ENCODE measurements at regions of chr2 and their contacts with region 1.

Region 1: GRCh38 chr2:70301344-70302194 is at the start of gene FAM136A:
- DNase-seq: peak; percentile 81 to 93 (median 88)
- ATAC-seq: peak; percentile 98
- H3K4me3 ChIP-seq: peak within 1 kb of the TSS; percentile 83
- H3K4me3 Mint-ChIP-seq: peak within 1 kb of the TSS; percentile 87 to 97 (median 92)
- H3K27ac ChIP-seq: peak within 1 kb of the TSS; percentile 81
- H3K27ac Mint-ChIP-seq: peak within 1 kb of the TSS; percentile 84 to 94 (median 90)
- H3K4me1 ChIP-seq: peaks cover 6 to 7% of the 10 kb centered on the region in 2 donors
- H3K4me1 Mint-ChIP-seq: peaks cover 10 to 40% (median 27%) of the 10 kb centered on the region in 7 donors
- H3K27me3 ChIP-seq: no peaks in the 10 kb centered on the region
- H3K27me3 Mint-ChIP-seq: no peaks in the 10 kb centered on the region
- total RNA-seq, gene FAM136A: 16.2 to 40.9 (median 28.2) TPM

Region 2: GRCh38 chr2:69914170-69914960 is 387.2 kb before region 1 on chr2:
- CTCF ChIA-PET with region 1: interaction called, 56 read pairs
- POLR2A ChIA-PET with region 1: interaction called, 20 read pairs
- intact Hi-C with region 1: loop called (anchors 1 kb)
- DNase-seq: peak in 7 of 9 donors; percentile 97 to 100 (median 100)
- ATAC-seq: peak; percentile 94
- H3K4me3 ChIP-seq: peak overlapping the region; percentile 98
- H3K4me3 Mint-ChIP-seq: peak overlapping the region; percentile 70 to 92 (median 82)
- H3K27ac ChIP-seq: peak overlapping the region; percentile 91
- H3K27ac Mint-ChIP-seq: peak overlapping the region; percentile 60 to 96 (median 89)
- H3K4me1 ChIP-seq: peaks cover 4 to 8% of the 10 kb centered on the region in 2 donors
- H3K4me1 Mint-ChIP-seq: peaks cover 8 to 39% (median 34%) of the 10 kb centered on the region in 7 donors
- H3K27me3 ChIP-seq: no peaks in the 10 kb centered on the region
- H3K27me3 Mint-ChIP-seq: no peaks in the 10 kb centered on the region

Region 3: DNA sequence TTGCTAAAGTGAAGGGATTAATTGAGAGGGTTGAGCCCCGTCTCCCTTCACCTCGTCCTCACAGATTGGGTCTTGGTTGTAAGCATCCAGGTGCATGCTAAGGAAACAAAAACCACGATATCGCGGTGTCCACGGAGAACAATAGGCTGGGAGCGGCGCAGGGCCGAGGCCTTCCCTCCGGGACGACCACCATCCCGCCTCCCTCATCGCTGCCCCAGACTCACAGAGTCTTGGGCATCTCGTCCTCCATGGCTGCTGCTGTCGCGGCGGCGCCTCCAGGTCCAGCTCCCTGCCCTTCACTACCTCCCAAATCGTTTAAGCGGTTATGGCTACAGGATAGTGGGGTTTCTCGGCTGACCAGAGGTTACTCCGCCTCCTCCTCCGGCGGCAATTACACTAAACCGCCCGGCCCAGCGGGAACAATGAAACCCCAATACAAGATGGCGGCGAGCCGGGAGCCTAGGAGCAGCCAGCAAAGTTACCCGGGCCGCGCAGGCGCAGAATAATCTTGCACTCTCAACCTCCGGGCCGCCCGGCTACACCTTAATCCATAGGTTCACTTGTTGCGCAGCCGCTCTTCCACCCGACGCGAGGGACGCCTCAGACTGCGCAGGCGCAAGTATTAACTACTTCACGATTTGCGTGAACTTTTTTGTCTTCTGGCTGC is 53.3 kb before region 1 on chr2 and contains the start of gene TIA1:
- CTCF ChIA-PET with region 1: no interaction called
- POLR2A ChIA-PET with region 1: no interaction called
- intact Hi-C with region 1: loop called (anchors 1 kb)
- DNase-seq: peak; percentile 94 to 99 (median 98)
- ATAC-seq: peak; percentile 98
- H3K4me3 ChIP-seq: peak within 1 kb of the TSS; percentile 87
- H3K4me3 Mint-ChIP-seq: peak within 1 kb of the TSS; percentile 83 to 99 (median 95)
- H3K27ac ChIP-seq: peak within 1 kb of the TSS; percentile 95
- H3K27ac Mint-ChIP-seq: peak within 1 kb of the TSS; percentile 91 to 100 (median 97)
- H3K4me1 ChIP-seq: peaks cover 13 to 24% of the 10 kb centered on the region in 2 donors
- H3K4me1 Mint-ChIP-seq: peaks cover 23 to 48% (median 40%) of the 10 kb centered on the region in 7 donors
- H3K27me3 ChIP-seq: no peaks in the 10 kb centered on the region
- H3K27me3 Mint-ChIP-seq: peaks cover 0 to 4% (median 0%) of the 10 kb centered on the region in 5 donors
- total RNA-seq, gene TIA1: 80.9 to 244 (median 163) TPM

Region 4: GRCh38 chr2:70283500-70284191 is 17.9 kb before region 1 on chr2:
- CTCF ChIA-PET with region 1: no interaction called
- POLR2A ChIA-PET with region 1: no interaction called
- intact Hi-C with region 1: no loop called
- DNase-seq: no peak
- ATAC-seq: no peak
- H3K4me3 ChIP-seq: no peak overlapping the region
- H3K4me3 Mint-ChIP-seq: peak overlapping the region in 4 of 10 donors; percentile 6 to 53 (median 42)
- H3K27ac ChIP-seq: peak overlapping the region; percentile 7
- H3K27ac Mint-ChIP-seq: peak overlapping the region in 8 of 9 donors; percentile 6 to 71 (median 48)
- H3K4me1 ChIP-seq: no peaks in the 10 kb centered on the region
- H3K4me1 Mint-ChIP-seq: peaks cover 18 to 62% (median 54%) of the 10 kb centered on the region in 7 donors
- H3K27me3 ChIP-seq: no peaks in the 10 kb centered on the region
- H3K27me3 Mint-ChIP-seq: no peaks in the 10 kb centered on the region

Region 5: GRCh38 chr2:70616168-70616694 is 314.7 kb after region 1 on chr2:
- CTCF ChIA-PET with region 1: interaction called, 46 read pairs
- POLR2A ChIA-PET with region 1: interaction called, 3 read pairs
- intact Hi-C with region 1: loop called (anchors 1 kb)
- DNase-seq: no peak
- ATAC-seq: no peak
- H3K4me3 ChIP-seq: no peak overlapping the region
- H3K4me3 Mint-ChIP-seq: no peak overlapping the region
- H3K27ac ChIP-seq: no peak overlapping the region
- H3K27ac Mint-ChIP-seq: no peak overlapping the region
- H3K4me1 ChIP-seq: no peaks in the 10 kb centered on the region
- H3K4me1 Mint-ChIP-seq: peaks cover 0 to 2% (median 0%) of the 10 kb centered on the region in 7 donors
- H3K27me3 ChIP-seq: no peaks in the 10 kb centered on the region
- H3K27me3 Mint-ChIP-seq: peaks cover 0 to 17% (median 0%) of the 10 kb centered on the region in 5 donors

Region 6: GRCh38 chr2:70789304-70790135 is 488.0 kb after region 1 on chr2:
- CTCF ChIA-PET with region 1: interaction called, 10 read pairs
- POLR2A ChIA-PET with region 1: no interaction called
- intact Hi-C with region 1: loop called (anchors 1 to 2 kb)
- DNase-seq: peak; percentile 44 to 70 (median 67)
- ATAC-seq: peak; percentile 81
- H3K4me3 ChIP-seq: peak overlapping the region; percentile 43
- H3K4me3 Mint-ChIP-seq: peak overlapping the region; percentile 79 to 93 (median 86)
- H3K27ac ChIP-seq: no peak overlapping the region
- H3K27ac Mint-ChIP-seq: peak overlapping the region in 1 of 9 donors; percentile 69
- H3K4me1 ChIP-seq: no peaks in the 10 kb centered on the region
- H3K4me1 Mint-ChIP-seq: peaks cover 9 to 22% (median 12%) of the 10 kb centered on the region in 7 donors
- H3K27me3 ChIP-seq: peaks cover 0 to 5% of the 10 kb centered on the region in 2 donors
- H3K27me3 Mint-ChIP-seq: peaks cover 41 to 70% (median 47%) of the 10 kb centered on the region in 5 donors

Region 7: DNA sequence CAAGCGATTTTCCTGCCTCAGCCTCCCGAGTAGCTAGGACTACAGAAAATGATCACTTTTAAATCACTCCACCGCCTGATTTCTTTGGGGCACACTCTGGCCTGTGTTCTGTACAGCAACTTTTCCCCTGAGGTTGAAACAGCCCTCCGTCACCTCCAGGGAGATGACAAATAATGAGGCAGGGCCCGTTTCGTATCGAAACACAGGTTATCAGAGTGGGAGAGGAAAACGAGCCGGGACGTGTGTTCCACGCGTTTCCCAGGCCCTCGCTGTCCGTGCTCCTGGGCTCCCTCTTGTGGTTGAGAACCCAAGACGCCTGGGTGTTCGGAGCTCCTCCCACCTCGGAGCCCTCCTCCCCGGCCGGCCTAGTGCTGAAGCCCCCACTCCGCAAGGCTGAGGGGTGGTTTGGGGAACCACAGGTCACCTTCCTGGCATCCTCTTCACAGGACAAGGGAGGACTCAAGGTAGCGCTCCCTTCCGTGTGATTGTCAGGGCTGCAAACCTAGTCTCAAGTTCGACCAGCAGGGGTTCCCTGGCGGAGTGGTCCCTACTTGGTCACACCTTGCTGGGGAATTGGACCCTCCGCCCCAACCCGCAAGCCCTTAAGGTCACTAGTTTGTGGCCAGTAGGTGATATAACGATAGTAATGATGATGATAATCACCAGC is 646.9 kb after region 1 on chr2:
- CTCF ChIA-PET with region 1: interaction called, 16 read pairs
- POLR2A ChIA-PET with region 1: interaction called, 4 read pairs
- intact Hi-C with region 1: loop called (anchors 1 to 5 kb)
- DNase-seq: peak; percentile 52 to 78 (median 70)
- ATAC-seq: peak; percentile 96
- H3K4me3 ChIP-seq: no peak overlapping the region
- H3K4me3 Mint-ChIP-seq: peak overlapping the region; percentile 73 to 96 (median 84)
- H3K27ac ChIP-seq: no peak overlapping the region
- H3K27ac Mint-ChIP-seq: peak overlapping the region in 2 of 9 donors; percentile 53 to 71
- H3K4me1 ChIP-seq: peaks cover 0 to 4% of the 10 kb centered on the region in 2 donors
- H3K4me1 Mint-ChIP-seq: peaks cover 10 to 18% (median 14%) of the 10 kb centered on the region in 7 donors
- H3K27me3 ChIP-seq: no peaks in the 10 kb centered on the region
- H3K27me3 Mint-ChIP-seq: peaks cover under 1 to 29% (median 23%) of the 10 kb centered on the region in 5 donors

Region 8: GRCh38 chr2:71226965-71227560 is 925.5 kb after region 1 on chr2 and contains the start of gene PAIP2B:
- CTCF ChIA-PET with region 1: no interaction called
- POLR2A ChIA-PET with region 1: no interaction called
- intact Hi-C with region 1: loop called in 1 of 2 experiments (anchors 5 kb)
- DNase-seq: peak; percentile 88 to 99 (median 99)
- ATAC-seq: peak; percentile 95
- H3K4me3 ChIP-seq: peak within 1 kb of the TSS; percentile 80
- H3K4me3 Mint-ChIP-seq: peak within 1 kb of the TSS; percentile 92 to 99 (median 97)
- H3K27ac ChIP-seq: peak within 1 kb of the TSS; percentile 82
- H3K27ac Mint-ChIP-seq: peak within 1 kb of the TSS; percentile 84 to 98 (median 92)
- H3K4me1 ChIP-seq: peaks cover 8 to 11% of the 10 kb centered on the region in 2 donors
- H3K4me1 Mint-ChIP-seq: peaks cover 13 to 34% (median 22%) of the 10 kb centered on the region in 7 donors
- H3K27me3 ChIP-seq: no peaks in the 10 kb centered on the region
- H3K27me3 Mint-ChIP-seq: peaks cover 0 to 28% (median 6%) of the 10 kb centered on the region in 5 donors
- total RNA-seq, gene PAIP2B: 1.3 to 14.1 (median 5.0) TPM